AG04450 (cell line): ENCODE measurements at regions of chr2 and their contacts with region 1.

Region 1: DNA sequence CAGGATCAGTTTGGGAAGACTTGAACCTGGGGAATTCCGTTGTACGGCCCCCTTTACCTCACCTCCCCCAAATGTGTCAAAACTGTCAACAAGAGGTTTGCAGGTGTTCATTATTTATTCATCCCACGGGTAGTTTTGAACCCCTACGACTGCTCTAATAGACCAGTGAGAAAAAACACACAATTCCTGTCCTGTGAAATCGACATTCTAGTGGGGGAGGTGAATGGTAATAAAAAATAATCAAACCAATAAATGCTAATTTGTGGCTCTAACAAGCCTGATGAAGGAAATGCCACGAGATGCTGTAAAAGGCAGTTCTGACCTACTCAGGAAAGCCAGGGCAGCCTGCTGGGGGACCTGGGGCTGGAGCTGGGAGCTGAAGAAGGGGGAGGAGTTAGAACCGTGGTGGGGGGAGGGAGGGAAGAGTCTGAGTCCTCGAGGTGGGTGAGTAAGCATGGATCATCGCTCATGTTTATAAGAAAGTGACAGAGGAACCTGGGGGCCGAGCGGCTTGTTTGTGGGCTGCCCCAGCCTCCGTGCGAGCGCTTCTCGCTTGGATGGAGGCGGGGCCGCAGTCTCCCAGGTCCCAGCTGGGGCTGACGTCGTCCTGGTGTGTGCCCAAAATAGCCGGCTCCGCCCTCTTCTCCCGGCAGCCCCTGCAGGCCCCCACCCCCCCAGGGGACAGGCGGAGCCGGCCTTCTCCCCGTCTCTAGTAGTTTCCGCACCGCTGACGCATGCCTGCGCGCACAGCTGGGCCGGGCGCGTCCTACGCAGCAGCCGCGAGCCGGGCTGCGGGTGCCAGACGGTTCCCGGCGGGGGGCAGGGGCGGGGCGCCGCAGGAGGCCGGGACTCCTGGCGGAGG is at the start of gene DNAJB2:
- DNase-seq: peak; percentile 99
- H3K4me3 ChIP-seq: peak within 1 kb of the TSS; percentile 83
- H3K27ac ChIP-seq: peak within 1 kb of the TSS; percentile 99
- H3K27me3 ChIP-seq: no peaks in the 10 kb centered on the region
- CTCF ChIP-seq: no peak
- polyA plus RNA-seq, gene DNAJB2: 40.6 and 41.1 TPM in 2 replicates

Region 2: GRCh38 chr2:219081701-219082331 is 197.1 kb before region 1 on chr2:
- CTCF ChIA-PET with region 1: no interaction called
- POLR2A ChIA-PET with region 1: no interaction called
- DNase-seq: no peak
- H3K4me3 ChIP-seq: no peak overlapping the region
- H3K27ac ChIP-seq: no peak overlapping the region
- H3K27me3 ChIP-seq: no peaks in the 10 kb centered on the region
- CTCF ChIP-seq: no peak

Region 3: GRCh38 chr2:219218732-219219701 is 59.9 kb before region 1 on chr2 and contains the start of gene ABCB6:
- CTCF ChIA-PET with region 1: interaction called, 4 read pairs
- POLR2A ChIA-PET with region 1: interaction called, 11 read pairs
- DNase-seq: peak; percentile 84
- H3K4me3 ChIP-seq: peak within 1 kb of the TSS; percentile 69
- H3K27ac ChIP-seq: peak within 1 kb of the TSS; percentile 96
- H3K27me3 ChIP-seq: no peaks in the 10 kb centered on the region
- CTCF ChIP-seq: no peak
- polyA plus RNA-seq, gene ABCB6: 20.9 and 22.2 TPM in 2 replicates

Region 4: DNA sequence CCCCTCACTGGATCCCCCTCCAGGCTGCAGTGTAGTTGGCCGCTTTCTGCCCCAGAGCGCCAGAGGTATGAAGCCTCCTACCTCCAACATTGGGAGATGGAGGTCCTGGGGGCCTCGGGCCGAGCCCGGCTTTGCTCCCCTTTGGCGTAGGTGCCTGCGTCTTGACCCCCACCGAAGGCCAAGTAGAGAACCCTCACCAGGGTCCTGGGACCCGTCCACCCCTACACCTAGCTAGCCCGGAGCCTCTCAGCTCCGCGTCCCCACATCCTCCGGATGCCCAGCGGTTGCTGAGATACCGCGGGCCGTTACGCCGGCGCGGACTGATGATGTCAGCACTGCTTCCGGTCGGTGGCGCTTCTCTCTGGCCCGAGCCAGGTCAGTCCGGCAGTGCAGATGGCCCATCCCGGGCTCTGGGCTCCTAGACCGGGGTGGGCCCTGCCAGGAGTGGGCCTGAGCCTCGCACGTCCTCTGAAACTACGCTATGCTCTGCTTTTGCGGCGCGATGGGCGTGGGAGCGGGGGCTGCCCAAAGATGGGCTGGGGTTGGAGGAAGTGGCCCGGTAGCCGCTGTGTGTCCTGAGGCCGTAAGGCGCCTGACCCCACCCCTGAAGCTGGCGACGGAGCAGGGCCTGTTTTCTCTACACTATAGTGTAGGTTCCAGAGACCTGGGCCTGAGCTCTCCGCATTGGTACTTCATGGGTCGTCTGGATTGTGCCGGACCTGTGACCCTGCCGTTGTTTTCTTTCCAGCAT is 33.6 kb before region 1 on chr2 and contains the starts of genes GLB1L and STK16:
- CTCF ChIA-PET with region 1: interaction called, 24 read pairs
- POLR2A ChIA-PET with region 1: interaction called, 11 read pairs
- DNase-seq: peak; percentile 80
- H3K4me3 ChIP-seq: peak within 1 kb of the TSS; percentile 97
- H3K27ac ChIP-seq: peak within 1 kb of the TSS; percentile 70
- H3K27me3 ChIP-seq: no peaks in the 10 kb centered on the region
- CTCF ChIP-seq: 0 out of 2 replicates have a peak, but pooled peaks have one; percentile 4
- polyA plus RNA-seq, gene GLB1L: 8.8 and 9.6 TPM in 2 replicates
- polyA plus RNA-seq, gene STK16: 33.9 and 36.6 TPM in 2 replicates

Region 5: GRCh38 chr2:219253753-219254590 is 24.9 kb before region 1 on chr2 and contains the start of gene TUBA4A:
- CTCF ChIA-PET with region 1: interaction called, 24 read pairs
- POLR2A ChIA-PET with region 1: interaction called, 8 read pairs
- DNase-seq: no peak
- H3K4me3 ChIP-seq: peak within 1 kb of the TSS; percentile 66
- H3K27ac ChIP-seq: no peak within 1 kb of the TSS
- H3K27me3 ChIP-seq: peaks cover 14% of the 10 kb centered on the region
- CTCF ChIP-seq: no peak
- polyA plus RNA-seq, gene TUBA4A: 22.4 and 22.6 TPM in 2 replicates

Region 6: GRCh38 chr2:219261024-219261855 is 17.6 kb before region 1 on chr2:
- CTCF ChIA-PET with region 1: interaction called, 56 read pairs
- POLR2A ChIA-PET with region 1: no interaction called
- DNase-seq: no peak
- H3K4me3 ChIP-seq: no peak overlapping the region
- H3K27ac ChIP-seq: no peak overlapping the region
- H3K27me3 ChIP-seq: peaks cover 28% of the 10 kb centered on the region
- CTCF ChIP-seq: no peak

Region 7: GRCh38 chr2:219430633-219431615 is 152.0 kb after region 1 on chr2:
- CTCF ChIA-PET with region 1: no interaction called
- POLR2A ChIA-PET with region 1: no interaction called
- DNase-seq: no peak
- H3K4me3 ChIP-seq: no peak overlapping the region
- H3K27ac ChIP-seq: no peak overlapping the region
- H3K27me3 ChIP-seq: no peaks in the 10 kb centered on the region
- CTCF ChIP-seq: peak; percentile 14; the same call in 1 of the 2 replicates

Region 8: DNA sequence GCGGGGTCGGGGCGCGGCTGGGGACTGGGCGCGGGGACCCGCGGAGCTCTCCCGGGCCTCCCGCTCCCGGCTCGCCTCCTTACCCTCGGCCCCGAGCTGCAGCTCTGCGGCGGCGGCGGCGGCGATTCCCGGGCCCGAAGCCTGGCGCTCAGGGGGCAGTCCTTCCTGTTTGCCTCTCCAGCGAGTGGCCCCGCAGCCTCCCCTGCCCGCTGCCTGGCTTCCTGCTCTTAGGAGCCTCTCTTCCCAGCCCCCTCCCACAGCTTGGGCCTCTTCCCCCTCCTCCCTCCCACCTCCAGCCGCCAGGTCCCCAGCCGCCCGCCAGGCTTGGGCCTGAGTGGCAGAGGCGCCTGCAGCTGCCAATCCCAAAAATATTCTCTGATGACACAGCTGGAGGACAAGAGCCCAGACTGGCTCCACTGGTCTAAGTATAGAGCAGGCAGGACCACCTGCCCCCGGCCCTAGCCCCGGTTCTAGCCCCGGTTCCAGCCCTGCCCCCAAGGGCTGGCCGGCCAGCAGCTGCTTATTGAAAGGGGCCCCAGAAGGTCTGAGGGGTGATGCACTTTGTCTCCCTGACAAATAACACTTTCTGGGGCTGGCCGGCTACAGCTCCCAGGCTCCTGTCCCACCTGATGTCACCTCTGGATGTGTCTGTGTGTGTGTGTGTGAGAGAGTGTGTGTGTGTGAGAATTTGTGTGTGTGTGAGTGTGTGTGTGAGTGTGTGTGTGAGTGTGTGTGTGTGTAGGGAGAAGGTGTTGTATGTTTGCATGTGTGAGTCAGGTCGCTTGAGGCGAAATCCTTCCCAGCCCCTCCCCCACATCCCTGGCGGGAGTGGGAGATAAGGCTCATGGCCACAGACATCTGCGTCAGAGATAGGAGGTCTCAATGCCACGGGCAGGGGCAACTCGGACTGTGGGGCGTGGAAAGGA is 292.7 kb after region 1 on chr2 and contains the start of gene OBSL1:
- CTCF ChIA-PET with region 1: no interaction called
- POLR2A ChIA-PET with region 1: no interaction called
- DNase-seq: no peak
- H3K4me3 ChIP-seq: peak within 1 kb of the TSS; percentile 68
- H3K27ac ChIP-seq: peak within 1 kb of the TSS; percentile 21
- H3K27me3 ChIP-seq: peaks cover 22% of the 10 kb centered on the region
- CTCF ChIP-seq: no peak
- polyA plus RNA-seq, gene OBSL1: 35.5 and 46.8 TPM in 2 replicates

Region 9: DNA sequence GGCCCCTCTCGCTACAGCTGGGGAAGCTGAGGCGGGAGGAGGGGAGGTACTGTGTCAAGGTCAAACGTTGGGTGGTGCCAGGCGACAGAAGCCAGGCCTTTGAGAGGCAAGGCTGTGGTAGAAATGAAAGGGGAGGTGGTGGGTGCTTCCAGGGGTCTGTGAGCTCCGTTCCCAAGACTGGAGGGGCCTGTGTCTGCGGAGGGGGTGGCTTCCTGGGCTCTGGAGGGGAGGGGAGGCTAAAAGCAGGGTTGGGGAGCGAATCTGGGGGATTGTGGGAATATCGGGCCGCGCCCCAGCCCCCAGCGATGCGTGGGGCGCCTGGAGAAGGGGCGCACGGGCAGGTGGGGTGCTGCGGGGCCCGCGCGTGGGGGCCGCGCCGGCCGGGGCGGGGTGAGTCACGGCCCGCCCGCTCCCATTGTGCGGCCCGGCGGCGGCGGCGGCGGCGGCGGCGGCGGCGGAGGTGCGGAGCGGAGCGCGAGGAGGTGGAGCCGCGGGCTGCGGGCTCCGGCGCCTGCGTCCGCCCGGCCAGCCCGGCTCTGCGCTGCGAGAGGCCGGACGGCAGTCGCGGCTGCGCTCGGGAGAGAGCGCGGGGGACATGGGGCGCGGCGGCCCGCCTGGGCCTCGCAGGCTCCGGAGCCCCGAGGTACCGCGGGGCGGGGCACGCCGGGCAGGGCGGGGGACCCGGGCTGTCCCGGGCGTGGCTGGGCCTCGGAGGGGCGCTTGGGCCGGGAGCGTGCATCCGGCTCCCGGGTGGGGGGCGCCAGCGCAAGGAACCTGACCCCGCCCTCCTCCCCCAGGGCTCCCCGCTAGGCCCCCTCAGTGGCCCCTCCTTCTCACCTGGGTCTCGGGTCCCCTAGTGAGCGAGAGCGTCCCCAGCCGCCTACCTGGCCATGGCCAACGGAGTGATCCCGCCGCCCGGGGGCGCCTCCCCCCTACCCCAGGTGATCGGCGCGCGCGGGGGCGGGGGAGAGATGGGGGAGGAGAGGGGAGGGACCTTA is 348.5 kb after region 1 on chr2 and contains the start of gene SLC4A3:
- CTCF ChIA-PET with region 1: no interaction called
- POLR2A ChIA-PET with region 1: no interaction called
- DNase-seq: no peak
- H3K4me3 ChIP-seq: peak within 1 kb of the TSS; percentile 60
- H3K27ac ChIP-seq: no peak within 1 kb of the TSS
- H3K27me3 ChIP-seq: peaks cover 22% of the 10 kb centered on the region
- CTCF ChIP-seq: no peak
- polyA plus RNA-seq, gene SLC4A3: 3.3 and 5.2 TPM in 2 replicates